ENCODE measurements at regions of chr3 and their contacts with region 1.

Region 1: GRCh38 chr3:195442573-195443390 is at the start of gene ACAP2:
- DNase-seq: peak; percentile 99 to 100
- H3K4me3 ChIP-seq: peak within 1 kb of the TSS; percentile 84 to 89
- H3K27ac ChIP-seq: peak within 1 kb of the TSS; percentile 89 to 92
- H3K4me1 ChIP-seq: peaks cover 0 to 8% of the 10 kb centered on the region in 2 donors
- H3K27me3 ChIP-seq: no peaks in the 10 kb centered on the region
- CTCF ChIP-seq: no peak
- total RNA-seq, gene ACAP2: 20.4 TPM

Region 2: DNA sequence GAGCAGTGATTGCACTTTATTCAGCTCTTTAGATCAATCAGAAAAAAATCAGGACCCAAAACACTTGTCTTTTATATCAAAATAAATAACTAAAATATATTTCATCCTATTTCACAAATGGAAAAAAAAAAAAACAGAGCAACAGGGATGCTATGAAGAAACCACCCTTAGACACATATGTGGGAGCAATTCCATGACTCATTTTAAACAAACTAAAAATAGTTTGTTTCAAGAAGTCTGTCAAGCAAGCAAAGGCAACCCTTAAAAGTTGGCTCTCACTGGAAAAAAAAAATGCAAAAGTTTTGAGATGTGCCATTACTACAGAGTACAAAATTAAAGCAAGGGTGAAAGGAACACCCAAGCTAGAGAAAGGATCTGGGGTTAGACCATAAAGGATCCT is 961.7 kb before region 1 on chr3:
- intact Hi-C with region 1: loop called (anchors 5 kb)
- DNase-seq: no peak
- H3K4me3 ChIP-seq: no peak overlapping the region
- H3K27ac ChIP-seq: peak overlapping the region; percentile 61 to 67
- H3K4me1 ChIP-seq: peaks cover 9 to 28% of the 10 kb centered on the region in 2 donors
- H3K27me3 ChIP-seq: no peaks in the 10 kb centered on the region
- CTCF ChIP-seq: no peak

Region 3: DNA sequence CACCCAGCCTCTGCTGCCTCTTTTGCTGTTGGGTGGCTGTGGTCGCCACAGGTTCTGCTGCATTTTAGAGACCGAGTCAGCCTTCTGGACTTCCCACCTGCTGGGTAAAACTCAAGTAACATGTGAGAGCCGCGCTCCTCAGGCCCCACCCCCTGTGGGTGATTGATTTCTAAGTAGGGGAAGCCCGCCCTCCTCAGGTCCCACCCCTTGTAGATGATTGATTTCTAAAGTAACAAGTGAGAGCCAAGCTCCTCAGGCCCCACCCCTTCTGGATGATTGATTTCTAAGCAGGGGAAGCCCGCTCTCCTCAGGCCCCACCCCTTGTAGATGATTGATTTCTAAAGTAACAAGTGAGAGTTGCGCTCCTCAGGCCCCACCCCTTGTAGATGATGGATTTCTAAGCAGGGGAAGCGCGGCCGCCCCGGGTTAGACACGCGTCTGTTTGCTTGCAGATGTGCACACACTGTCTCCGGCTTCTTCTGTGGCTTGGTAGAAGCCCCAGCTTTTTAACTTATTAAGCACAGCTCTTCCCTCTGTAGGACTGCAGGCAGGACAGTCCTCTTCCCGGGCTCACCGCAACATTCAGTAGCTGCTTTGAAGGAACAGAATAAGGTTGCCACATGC is 673.6 kb before region 1 on chr3:
- intact Hi-C with region 1: loop called (anchors 5 kb)
- DNase-seq: peak; percentile 85 to 95
- H3K4me3 ChIP-seq: peak overlapping the region; percentile 36 to 62
- H3K27ac ChIP-seq: no peak overlapping the region
- H3K4me1 ChIP-seq: peaks cover 0 to 9% of the 10 kb centered on the region in 2 donors
- H3K27me3 ChIP-seq: no peaks in the 10 kb centered on the region
- CTCF ChIP-seq: no peak

Region 4: DNA sequence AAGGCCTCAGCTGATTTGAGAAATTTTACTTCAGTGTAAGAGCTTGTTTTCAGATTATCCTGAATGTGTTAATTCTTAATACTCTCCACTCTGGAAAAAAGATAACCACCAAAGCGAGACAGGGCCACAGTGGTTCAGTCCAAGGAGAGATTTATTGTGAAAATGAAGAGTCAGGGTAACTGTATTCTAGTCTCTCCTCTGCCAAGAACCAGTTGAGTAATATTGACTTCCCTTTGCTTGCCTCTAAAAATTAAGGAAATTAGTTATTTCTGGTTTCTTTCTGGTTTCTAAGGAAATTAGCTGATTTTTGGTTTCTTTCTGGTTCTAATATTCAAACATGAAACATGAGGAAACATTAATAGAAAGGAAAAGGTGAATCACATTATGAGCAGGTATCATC is 65.4 kb after region 1 on chr3:
- intact Hi-C with region 1: no loop called
- DNase-seq: no peak
- H3K4me3 ChIP-seq: no peak overlapping the region
- H3K27ac ChIP-seq: no peak overlapping the region
- H3K4me1 ChIP-seq: no peaks in the 10 kb centered on the region
- H3K27me3 ChIP-seq: no peaks in the 10 kb centered on the region
- CTCF ChIP-seq: no peak

Region 5: DNA sequence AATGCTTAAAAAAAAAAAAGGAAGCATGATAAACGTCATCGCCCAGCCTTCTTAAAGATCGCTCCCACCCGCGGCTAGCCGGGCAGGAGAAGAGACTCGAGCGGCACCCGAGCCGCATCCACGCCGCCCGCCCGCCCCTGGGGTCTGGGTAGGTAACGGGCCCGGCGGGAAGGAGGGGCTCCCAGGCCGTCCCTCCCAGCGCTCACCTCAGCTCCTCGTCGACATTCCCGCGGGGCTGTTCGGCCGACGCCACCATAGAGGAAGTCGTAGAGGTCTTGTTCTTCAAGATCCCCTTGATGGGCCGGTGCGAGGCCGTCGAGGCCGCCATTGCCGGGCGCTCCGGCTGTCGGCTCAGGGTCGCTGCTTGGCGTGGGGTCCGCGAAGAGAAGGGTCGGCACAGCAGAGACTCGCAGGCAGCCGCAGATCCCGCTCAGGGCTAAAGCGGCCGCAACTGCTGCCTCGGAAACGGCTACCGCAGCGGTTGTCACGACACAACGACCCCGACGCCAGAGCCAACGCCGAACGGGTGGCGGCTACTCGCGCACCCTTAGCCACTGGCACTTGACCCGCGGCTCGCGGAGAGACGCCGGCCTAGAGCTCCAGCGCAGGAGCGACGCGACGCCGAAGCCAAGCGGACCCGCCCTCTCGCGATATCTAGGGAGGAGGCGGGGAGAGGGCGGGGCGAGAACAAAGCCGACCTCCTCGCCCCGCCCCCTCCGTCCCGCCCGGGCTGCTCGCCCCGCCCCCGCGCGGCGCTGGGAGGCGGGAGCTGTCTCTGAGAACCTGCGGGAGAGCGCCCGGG is 100.1 kb after region 1 on chr3 and contains the start of gene PPP1R2:
- intact Hi-C with region 1: loop called (anchors 1 kb)
- DNase-seq: peak; percentile 51 to 95
- H3K4me3 ChIP-seq: peak within 1 kb of the TSS; percentile 78 to 83
- H3K27ac ChIP-seq: peak within 1 kb of the TSS; percentile 87 to 93
- H3K4me1 ChIP-seq: peaks cover 21 to 48% of the 10 kb centered on the region in 2 donors
- H3K27me3 ChIP-seq: no peaks in the 10 kb centered on the region
- CTCF ChIP-seq: no peak
- total RNA-seq, gene PPP1R2: 62.3 TPM

Region 6: GRCh38 chr3:197298341-197298857 is 1855.6 kb after region 1 on chr3 and contains the start of gene DLG1:
- intact Hi-C with region 1: loop called (anchors 5 kb)
- DNase-seq: peak; percentile 38 to 93
- H3K4me3 ChIP-seq: peak within 1 kb of the TSS; percentile 87 to 98
- H3K27ac ChIP-seq: peak within 1 kb of the TSS; percentile 89 to 91
- H3K4me1 ChIP-seq: peaks cover 0 to 14% of the 10 kb centered on the region in 2 donors
- H3K27me3 ChIP-seq: no peaks in the 10 kb centered on the region
- CTCF ChIP-seq: no peak
- total RNA-seq, gene DLG1: 31.0 TPM